ENCODE measurements at regions of chr18 and their contacts with region 1.

Region 1: GRCh38 chr18:13216092-13216582 is 2.4 kb upstream of the LDLRAD4 start:
- DNase-seq: peak; percentile 52 to 64 (median 59)
- H3K4me3 ChIP-seq: peak overlapping the region in 1 of 2 donors; percentile 61
- H3K4me3 Mint-ChIP-seq: peak overlapping the region; percentile 87 to 97 (median 92)
- H3K27ac ChIP-seq: no peak overlapping the region
- H3K27ac Mint-ChIP-seq: peak overlapping the region; percentile 53 to 98 (median 90)
- H3K4me1 ChIP-seq: peaks cover 26% of the 10 kb centered on the region
- H3K4me1 Mint-ChIP-seq: peaks cover 13 to 29% (median 24%) of the 10 kb centered on the region in 4 donors
- H3K27me3 ChIP-seq: no peaks in the 10 kb centered on the region
- H3K27me3 Mint-ChIP-seq: peaks cover 4 to 30% of the 10 kb centered on the region in 2 donors

Region 2: DNA sequence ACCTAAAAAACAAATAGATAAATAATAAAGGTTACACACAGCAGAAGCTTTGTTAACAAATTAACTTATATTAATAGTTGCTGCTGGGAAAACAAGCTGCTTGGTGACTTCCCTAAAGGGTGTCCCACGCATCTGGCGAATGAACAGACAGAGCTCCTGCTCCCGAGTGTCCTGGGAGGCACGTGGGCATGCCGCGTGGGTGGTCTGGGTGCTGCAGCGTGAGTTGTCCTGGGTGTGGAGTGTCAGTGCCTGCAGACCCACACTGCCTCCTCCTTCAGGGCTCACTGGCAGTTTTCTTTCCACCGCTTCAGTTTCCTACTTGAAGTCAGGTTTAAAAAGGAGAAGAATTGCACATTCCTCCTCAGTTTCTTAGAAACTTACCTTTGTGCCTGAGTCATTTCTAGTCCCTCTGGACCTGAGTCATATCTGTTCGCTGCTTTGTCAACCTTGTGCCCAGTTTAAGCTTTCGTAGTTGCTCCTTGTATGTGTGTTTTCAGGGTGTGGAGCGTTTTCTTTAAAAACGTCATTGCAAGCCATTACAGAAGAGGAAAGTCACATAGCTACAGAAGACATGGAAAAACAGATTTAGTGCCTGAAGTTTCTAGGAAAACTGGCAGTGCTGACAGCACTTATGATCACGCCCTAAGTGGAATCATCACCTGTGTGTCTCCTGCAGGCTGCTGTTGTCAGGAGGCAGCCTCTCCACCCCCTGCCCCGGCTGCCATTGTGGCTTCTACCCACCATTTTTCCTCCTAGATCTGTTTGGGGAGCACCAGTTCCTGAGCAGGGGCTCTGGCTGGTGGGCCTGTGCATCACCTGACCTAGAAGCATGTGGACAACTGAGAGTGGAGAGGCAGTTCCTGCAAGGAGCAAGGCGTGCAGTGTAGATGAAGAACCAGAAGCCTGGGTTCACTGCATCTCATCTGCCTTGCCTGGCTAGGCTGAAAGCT is 1210.3 kb before region 1 on chr18:
- CTCF ChIA-PET with region 1: no interaction called
- POLR2A ChIA-PET with region 1: no interaction called
- intact Hi-C with region 1: no loop called
- DNase-seq: no peak
- H3K4me3 ChIP-seq: no peak overlapping the region
- H3K4me3 Mint-ChIP-seq: no peak overlapping the region
- H3K27ac ChIP-seq: no peak overlapping the region
- H3K27ac Mint-ChIP-seq: no peak overlapping the region
- H3K4me1 ChIP-seq: no peaks in the 10 kb centered on the region
- H3K4me1 Mint-ChIP-seq: no peaks in the 10 kb centered on the region
- H3K27me3 ChIP-seq: no peaks in the 10 kb centered on the region
- H3K27me3 Mint-ChIP-seq: no peaks in the 10 kb centered on the region

Region 3: DNA sequence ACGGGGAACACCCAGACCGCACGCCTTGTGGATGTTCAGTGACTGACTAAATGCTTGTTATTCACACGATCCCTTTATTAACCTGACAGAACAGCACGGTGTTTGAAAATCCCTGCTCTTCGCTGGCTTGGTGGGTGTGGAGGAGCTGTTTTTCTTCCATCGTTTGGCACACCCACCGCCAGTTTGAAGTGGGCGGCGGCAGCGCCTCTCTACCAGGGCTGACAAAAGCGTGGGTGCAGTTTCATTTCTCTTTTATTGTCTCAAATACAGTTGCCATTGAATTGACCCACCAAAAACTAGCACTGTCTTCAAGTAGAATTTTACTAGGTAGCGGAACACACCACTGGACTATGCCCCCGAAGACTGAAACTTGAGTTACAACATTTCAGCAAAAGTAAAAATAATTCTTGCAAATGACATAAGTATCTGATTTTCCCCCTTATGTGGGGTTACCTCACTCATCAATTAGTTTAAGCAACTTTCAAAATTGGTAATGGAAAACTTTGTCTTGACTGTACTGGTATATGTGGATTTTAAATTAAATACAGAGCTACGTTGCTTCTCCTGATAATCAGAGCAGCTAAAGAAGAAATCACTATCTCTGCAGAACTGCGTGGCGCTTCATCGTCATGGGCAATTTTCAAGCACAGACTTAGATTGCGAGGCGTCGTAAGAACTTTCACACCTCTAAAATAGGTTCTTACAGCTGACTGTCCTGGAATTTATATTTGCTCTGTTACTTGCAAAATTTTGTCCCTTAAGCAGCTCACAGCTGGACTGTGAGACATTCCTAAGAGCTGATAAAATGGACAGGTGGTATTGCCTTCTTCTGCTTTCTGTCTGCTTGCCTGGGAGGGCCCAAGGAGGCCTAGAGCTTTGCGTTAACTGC is 63.3 kb after region 1 on chr18:
- CTCF ChIA-PET with region 1: interaction called, 7 read pairs
- POLR2A ChIA-PET with region 1: interaction called, 8 read pairs
- intact Hi-C with region 1: loop called (anchors 2 kb)
- DNase-seq: peak in 3 of 5 donors; percentile 37 to 51 (median 41)
- H3K4me3 ChIP-seq: peak overlapping the region; percentile 7 to 46
- H3K4me3 Mint-ChIP-seq: peak overlapping the region; percentile 81 to 93 (median 88)
- H3K27ac ChIP-seq: peak overlapping the region; percentile 53
- H3K27ac Mint-ChIP-seq: peak overlapping the region; percentile 82 to 98 (median 94)
- H3K4me1 ChIP-seq: peaks cover 80% of the 10 kb centered on the region
- H3K4me1 Mint-ChIP-seq: peaks cover 48 to 88% (median 72%) of the 10 kb centered on the region in 4 donors
- H3K27me3 ChIP-seq: no peaks in the 10 kb centered on the region
- H3K27me3 Mint-ChIP-seq: peaks cover 0 to 2% of the 10 kb centered on the region in 2 donors

Region 4: GRCh38 chr18:13435596-13436327 is 219.6 kb after region 1 on chr18:
- CTCF ChIA-PET with region 1: interaction called, 22 read pairs
- POLR2A ChIA-PET with region 1: interaction called, 4 read pairs
- intact Hi-C with region 1: loop called (anchors 1 kb)
- DNase-seq: peak in 2 of 5 donors; percentile 15 to 53
- H3K4me3 ChIP-seq: no peak overlapping the region
- H3K4me3 Mint-ChIP-seq: peak overlapping the region in 5 of 8 donors; percentile 30 to 89 (median 67)
- H3K27ac ChIP-seq: no peak overlapping the region
- H3K27ac Mint-ChIP-seq: peak overlapping the region; percentile 79 to 97 (median 95)
- H3K4me1 ChIP-seq: peaks cover 50% of the 10 kb centered on the region
- H3K4me1 Mint-ChIP-seq: peaks cover 36 to 58% (median 50%) of the 10 kb centered on the region in 4 donors
- H3K27me3 ChIP-seq: no peaks in the 10 kb centered on the region
- H3K27me3 Mint-ChIP-seq: no peaks in the 10 kb centered on the region

Region 5: GRCh38 chr18:13525381-13526029 is 309.4 kb after region 1 on chr18:
- CTCF ChIA-PET with region 1: interaction called, 46 read pairs
- POLR2A ChIA-PET with region 1: interaction called, 3 read pairs
- intact Hi-C with region 1: loop called (anchors 2 kb)
- DNase-seq: no peak
- H3K4me3 ChIP-seq: no peak overlapping the region
- H3K4me3 Mint-ChIP-seq: no peak overlapping the region
- H3K27ac ChIP-seq: no peak overlapping the region
- H3K27ac Mint-ChIP-seq: no peak overlapping the region
- H3K4me1 ChIP-seq: no peaks in the 10 kb centered on the region
- H3K4me1 Mint-ChIP-seq: peaks cover 5 to 13% (median 7%) of the 10 kb centered on the region in 4 donors
- H3K27me3 ChIP-seq: no peaks in the 10 kb centered on the region
- H3K27me3 Mint-ChIP-seq: no peaks in the 10 kb centered on the region

Region 6: DNA sequence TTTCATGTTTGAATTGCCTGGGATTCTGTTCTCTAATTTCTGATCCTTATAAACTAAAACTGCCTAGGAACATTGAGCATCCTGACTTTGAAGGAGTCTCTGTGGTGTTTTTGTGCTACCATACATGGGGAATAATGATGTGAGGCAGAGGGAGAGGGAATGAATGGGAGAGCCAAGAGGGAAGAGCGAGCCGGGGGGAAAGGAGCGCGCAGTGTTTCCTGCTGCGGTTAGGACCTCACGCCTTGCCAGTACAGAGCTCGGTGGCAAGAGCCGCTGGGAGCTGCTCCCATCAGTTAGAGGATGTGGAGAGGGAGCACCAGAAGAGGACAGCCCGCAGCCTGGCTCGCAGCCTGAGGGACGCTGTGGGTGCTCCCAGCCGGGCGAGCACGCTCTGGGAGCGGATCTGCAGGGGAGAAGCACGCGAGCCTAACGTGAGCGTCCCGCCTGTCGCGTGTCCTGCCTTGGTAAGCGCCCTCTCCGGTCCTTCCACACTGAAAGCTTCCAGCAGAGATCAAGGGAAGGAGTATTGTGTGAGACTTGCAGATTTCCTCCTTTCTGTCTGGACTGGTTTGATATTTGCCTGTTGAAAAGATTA is 395.6 kb after region 1 on chr18:
- CTCF ChIA-PET with region 1: interaction called, 16 read pairs
- POLR2A ChIA-PET with region 1: interaction called, 5 read pairs
- intact Hi-C with region 1: loop called (anchors 1 kb)
- DNase-seq: no peak
- H3K4me3 ChIP-seq: peak overlapping the region; percentile 34 to 51
- H3K4me3 Mint-ChIP-seq: peak overlapping the region; percentile 78 to 96 (median 88)
- H3K27ac ChIP-seq: peak overlapping the region; percentile 11
- H3K27ac Mint-ChIP-seq: peak overlapping the region; percentile 83 to 96 (median 91)
- H3K4me1 ChIP-seq: peaks cover 81% of the 10 kb centered on the region
- H3K4me1 Mint-ChIP-seq: peaks cover 68 to 85% (median 76%) of the 10 kb centered on the region in 4 donors
- H3K27me3 ChIP-seq: no peaks in the 10 kb centered on the region
- H3K27me3 Mint-ChIP-seq: no peaks in the 10 kb centered on the region

Region 7: DNA sequence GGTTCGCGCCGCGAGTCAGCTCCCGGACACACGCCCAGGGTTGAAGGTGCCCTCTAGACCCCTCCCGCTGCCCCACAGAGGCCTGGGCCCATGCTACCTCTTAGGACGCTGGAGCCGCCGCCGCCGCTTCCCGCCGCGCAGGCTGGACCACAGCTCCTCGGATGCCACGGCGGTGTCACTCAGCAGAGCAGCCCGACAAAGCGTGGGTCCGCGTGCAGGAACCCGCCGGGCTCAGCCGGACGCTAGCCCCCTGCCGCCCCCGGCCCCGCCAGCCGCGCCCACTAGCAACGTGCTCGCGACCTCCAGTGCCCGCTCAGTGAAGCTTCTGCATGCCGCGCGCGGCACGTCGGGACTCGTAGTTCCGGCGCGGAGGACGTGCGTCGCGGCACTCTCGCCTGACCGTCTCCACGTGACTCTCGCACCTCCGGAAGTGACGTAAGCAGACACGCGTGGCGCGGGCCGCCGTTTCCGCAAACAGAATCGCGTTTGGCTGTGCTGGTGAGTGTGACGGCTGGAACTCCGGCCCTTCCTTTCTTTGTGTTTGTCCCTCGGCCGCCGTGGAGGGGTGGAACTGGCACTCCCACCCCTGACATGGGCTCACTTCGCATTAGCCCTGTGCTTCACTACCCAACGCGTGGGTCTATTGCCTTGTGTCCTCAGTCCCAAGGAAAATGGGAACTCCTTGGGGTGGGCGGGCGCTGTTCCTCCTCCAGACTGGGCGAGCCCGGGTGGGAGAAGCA is 510.3 kb after region 1 on chr18 and contains the starts of genes FAM210A and RNMT:
- CTCF ChIA-PET with region 1: interaction called, 12 read pairs
- POLR2A ChIA-PET with region 1: interaction called, 5 read pairs
- intact Hi-C with region 1: loop called (anchors 1 kb)
- DNase-seq: peak; percentile 90 to 95 (median 92)
- H3K4me3 ChIP-seq: peak within 1 kb of the TSS; percentile 76 to 78
- H3K4me3 Mint-ChIP-seq: peak within 1 kb of the TSS; percentile 87 to 97 (median 92)
- H3K27ac ChIP-seq: peak within 1 kb of the TSS; percentile 96
- H3K27ac Mint-ChIP-seq: peak within 1 kb of the TSS; percentile 85 to 98 (median 97)
- H3K4me1 ChIP-seq: peaks cover 49% of the 10 kb centered on the region
- H3K4me1 Mint-ChIP-seq: peaks cover 41 to 67% (median 51%) of the 10 kb centered on the region in 4 donors
- H3K27me3 ChIP-seq: no peaks in the 10 kb centered on the region
- H3K27me3 Mint-ChIP-seq: no peaks in the 10 kb centered on the region
- total RNA-seq, gene FAM210A: 9.4 to 10.2 TPM
- total RNA-seq, gene RNMT: 53.7 to 55.0 TPM

Region 8: GRCh38 chr18:13918898-13919297 is 702.8 kb after region 1 on chr18:
- CTCF ChIA-PET with region 1: no interaction called
- POLR2A ChIA-PET with region 1: no interaction called
- intact Hi-C with region 1: no loop called
- DNase-seq: no peak
- H3K4me3 ChIP-seq: no peak overlapping the region
- H3K4me3 Mint-ChIP-seq: no peak overlapping the region
- H3K27ac ChIP-seq: no peak overlapping the region
- H3K27ac Mint-ChIP-seq: no peak overlapping the region
- H3K4me1 ChIP-seq: no peaks in the 10 kb centered on the region
- H3K4me1 Mint-ChIP-seq: no peaks in the 10 kb centered on the region
- H3K27me3 ChIP-seq: no peaks in the 10 kb centered on the region
- H3K27me3 Mint-ChIP-seq: peaks cover 0 to 3% of the 10 kb centered on the region in 2 donors